ENCODE measurements at regions of chr19 and their contacts with region 1.

Region 1: GRCh38 chr19:3108775-3109174 is 14.6 kb downstream of the GNA11 start:
- DNase-seq: peak; percentile 84
- ATAC-seq: peak; percentile 61
- H3K4me3 Mint-ChIP-seq: no peak overlapping the region
- H3K27ac Mint-ChIP-seq: peak overlapping the region; percentile 86
- H3K4me1 Mint-ChIP-seq: peaks cover 24% of the 10 kb centered on the region
- H3K27me3 Mint-ChIP-seq: no peaks in the 10 kb centered on the region
- CTCF ChIP-seq: peak; percentile 72

Region 2: DNA sequence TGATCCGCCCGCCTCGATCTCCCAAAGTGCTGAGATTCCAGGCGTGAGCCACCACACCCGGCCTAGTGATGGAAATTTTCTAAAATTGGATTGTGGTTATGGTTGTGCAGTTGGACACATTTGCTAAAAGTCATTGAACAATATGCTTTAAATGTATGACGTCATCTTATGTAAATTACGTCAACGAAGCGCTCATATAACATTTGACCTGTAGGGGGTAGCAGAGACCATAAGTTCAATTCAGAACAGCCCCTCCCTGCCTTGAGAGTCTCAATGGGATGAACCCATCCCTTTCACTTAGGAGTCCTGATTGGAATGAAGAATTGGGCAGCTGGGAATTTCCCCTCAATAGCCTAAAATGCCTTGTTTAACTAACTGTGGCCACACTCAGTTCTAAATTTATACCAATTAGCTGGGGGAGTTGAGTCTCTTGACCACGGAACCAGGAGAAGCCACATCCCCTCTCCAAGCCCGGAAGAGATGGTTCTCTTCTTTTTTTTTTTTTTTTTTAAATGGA is 146.7 kb before region 1 on chr19:
- CTCF ChIA-PET with region 1: interaction called, 51 read pairs
- POLR2A ChIA-PET with region 1: interaction called, 3 read pairs
- DNase-seq: peak; percentile 52
- ATAC-seq: peak; percentile 84
- H3K4me3 Mint-ChIP-seq: no peak overlapping the region
- H3K27ac Mint-ChIP-seq: peak overlapping the region; percentile 92
- H3K4me1 Mint-ChIP-seq: peaks cover 2% of the 10 kb centered on the region; the same call in 1 of the 2 replicates
- H3K27me3 Mint-ChIP-seq: no peaks in the 10 kb centered on the region; the same call in 1 of the 2 replicates
- CTCF ChIP-seq: peak; percentile 83

Region 3: GRCh38 chr19:3035542-3036118 is 73.1 kb before region 1 on chr19:
- CTCF ChIA-PET with region 1: interaction called, 36 read pairs
- POLR2A ChIA-PET with region 1: interaction called, 3 read pairs
- DNase-seq: peak; percentile 98
- ATAC-seq: peak; percentile 87
- H3K4me3 Mint-ChIP-seq: peak overlapping the region; percentile 86
- H3K27ac Mint-ChIP-seq: peak overlapping the region; percentile 93
- H3K4me1 Mint-ChIP-seq: peaks cover 27% of the 10 kb centered on the region
- H3K27me3 Mint-ChIP-seq: peaks cover 66% of the 10 kb centered on the region
- CTCF ChIP-seq: no peak

Region 4: GRCh38 chr19:3075895-3076431 is 32.8 kb before region 1 on chr19:
- CTCF ChIA-PET with region 1: interaction called, 65 read pairs
- POLR2A ChIA-PET with region 1: no interaction called
- DNase-seq: peak; percentile 76
- ATAC-seq: peak; percentile 78
- H3K4me3 Mint-ChIP-seq: peak overlapping the region; percentile 54
- H3K27ac Mint-ChIP-seq: no peak overlapping the region
- H3K4me1 Mint-ChIP-seq: peaks cover 2% of the 10 kb centered on the region; the same call in 1 of the 2 replicates
- H3K27me3 Mint-ChIP-seq: peaks cover 4% of the 10 kb centered on the region
- CTCF ChIP-seq: peak; percentile 81

Region 5: DNA sequence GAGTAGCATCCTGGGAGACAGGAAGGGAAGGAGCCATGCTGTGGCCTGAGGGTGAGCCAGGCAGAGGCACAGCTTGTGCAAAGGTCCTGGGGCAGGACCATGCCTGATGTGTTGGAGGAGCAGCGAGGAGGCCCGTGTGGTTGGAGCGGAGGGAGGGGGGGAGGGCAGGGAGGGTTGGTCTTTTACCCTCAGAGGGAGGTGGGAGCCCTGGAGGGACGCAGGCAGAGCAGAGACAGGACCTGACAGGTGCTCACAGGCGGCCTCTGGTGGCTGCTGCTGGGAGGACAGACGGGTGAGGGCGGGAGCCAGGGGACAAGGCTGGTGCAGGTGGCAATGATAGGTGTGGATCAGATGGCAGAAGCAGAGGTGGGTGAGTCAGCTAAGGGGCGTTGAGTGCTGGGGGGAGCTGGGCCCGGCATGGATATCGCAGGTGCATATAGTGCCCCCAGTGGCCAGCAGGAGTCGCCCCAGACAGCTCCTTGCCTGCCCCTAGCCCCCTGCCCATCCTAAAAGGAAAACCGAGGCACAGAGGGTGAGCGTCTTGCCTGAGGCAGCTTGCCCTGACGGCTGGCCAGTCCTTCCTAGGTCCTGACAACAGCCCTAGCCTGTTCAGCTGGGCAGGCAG is 17.2 kb after region 1 on chr19:
- CTCF ChIA-PET with region 1: interaction called, 30 read pairs
- POLR2A ChIA-PET with region 1: no interaction called
- DNase-seq: peak; percentile 85
- ATAC-seq: peak; percentile 98
- H3K4me3 Mint-ChIP-seq: no peak overlapping the region
- H3K27ac Mint-ChIP-seq: no peak overlapping the region
- H3K4me1 Mint-ChIP-seq: no peaks in the 10 kb centered on the region
- H3K27me3 Mint-ChIP-seq: no peaks in the 10 kb centered on the region
- CTCF ChIP-seq: peak; percentile 80

Measured in WTC11 (cell line).